Left cardiac atrium (tissue), 4 donors: ENCODE measurements at regions of chr4 and their contacts with region 1.

Region 1: DNA sequence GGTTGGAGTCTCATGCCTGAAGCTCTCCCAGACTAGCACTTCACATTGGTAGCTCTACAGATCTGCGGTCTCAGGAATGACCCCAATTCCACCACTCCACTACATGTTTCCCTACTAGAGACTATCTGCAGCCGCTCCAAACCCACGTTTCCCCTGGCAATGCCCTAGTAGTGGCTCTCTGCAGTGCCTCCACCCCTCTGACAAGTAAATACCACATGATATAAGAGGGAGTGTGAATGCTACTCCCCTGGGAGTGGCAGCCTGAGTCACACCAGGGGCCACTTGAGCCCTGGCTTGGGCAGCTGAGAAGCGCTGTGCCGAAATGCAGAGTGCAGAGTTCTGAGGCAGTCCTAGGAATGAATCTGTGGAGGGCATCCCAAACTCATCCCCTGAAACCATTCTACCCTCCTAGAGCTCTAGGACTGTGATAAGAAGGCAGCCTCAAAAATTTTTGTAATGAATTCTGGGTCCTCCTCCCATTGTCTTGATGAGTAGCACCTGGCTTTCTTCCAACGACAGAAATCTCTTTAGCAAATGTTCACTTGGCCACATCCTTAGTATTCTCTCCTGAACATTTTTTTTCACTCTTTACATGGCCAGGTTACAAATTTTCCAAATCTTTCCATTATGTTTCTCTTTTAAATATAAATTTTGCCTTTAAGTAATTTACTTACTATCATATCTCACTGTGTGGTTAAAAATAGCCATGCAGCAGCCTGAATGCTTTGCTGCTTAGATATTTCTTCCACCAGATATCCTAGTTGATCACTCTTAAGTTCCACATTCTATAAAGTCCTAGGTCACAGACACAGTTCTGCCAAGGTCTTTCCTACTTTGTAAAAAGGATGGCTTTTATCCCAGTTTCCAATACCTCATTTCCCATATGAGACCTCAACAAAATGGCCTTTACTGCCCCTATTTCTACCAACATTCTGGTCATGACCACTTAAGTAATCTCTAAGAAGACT is 160.2 kb upstream of the CPEB2 start:
- DNase-seq: peak; percentile 51
- ATAC-seq: peak; percentile 84 to 98

Region 2: GRCh38 chr4:14787894-14788293 is 54.2 kb before region 1 on chr4:
- intact Hi-C with region 1: no loop called
- DNase-seq: no peak
- ATAC-seq: no peak

Region 3: DNA sequence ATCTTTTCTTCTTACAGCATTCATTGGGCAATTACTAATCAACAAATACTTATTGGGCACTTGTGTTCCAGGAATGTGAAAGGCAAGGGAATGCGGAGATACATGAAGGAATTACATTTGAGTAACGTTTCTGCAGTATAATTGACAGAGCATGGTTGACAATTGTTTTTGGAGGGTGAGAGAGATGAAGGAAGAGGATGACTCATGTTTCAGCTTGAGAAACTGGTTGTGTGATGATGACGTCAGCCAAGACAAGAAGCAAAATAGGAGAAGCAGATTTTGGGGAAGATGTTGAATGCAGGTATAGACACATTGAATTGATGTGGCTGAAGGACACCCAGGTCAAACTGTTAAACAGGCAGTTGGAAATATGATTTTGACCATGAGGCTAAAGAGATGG is 152.2 kb after region 1 on chr4:
- intact Hi-C with region 1: loop called in 1 of 2 experiments (anchors 10 kb)
- DNase-seq: no peak
- ATAC-seq: no peak